Psoas muscle (tissue), 8 donors: ENCODE measurements at regions of chr9 and their contacts with region 1.

Region 1: GRCh38 chr9:137974588-137975526 is 97.3 kb downstream of the CACNA1B start:
- DNase-seq: peak in 1 of 2 donors; percentile 29
- ATAC-seq: no peak
- H3K4me3 ChIP-seq: no peak overlapping the region
- H3K27ac ChIP-seq: no peak overlapping the region
- H3K4me1 ChIP-seq: no peaks in the 10 kb centered on the region
- H3K27me3 ChIP-seq: peaks cover 0 to 2% (median 0%) of the 10 kb centered on the region in 3 donors
- CTCF ChIP-seq: no peak

Region 2: DNA sequence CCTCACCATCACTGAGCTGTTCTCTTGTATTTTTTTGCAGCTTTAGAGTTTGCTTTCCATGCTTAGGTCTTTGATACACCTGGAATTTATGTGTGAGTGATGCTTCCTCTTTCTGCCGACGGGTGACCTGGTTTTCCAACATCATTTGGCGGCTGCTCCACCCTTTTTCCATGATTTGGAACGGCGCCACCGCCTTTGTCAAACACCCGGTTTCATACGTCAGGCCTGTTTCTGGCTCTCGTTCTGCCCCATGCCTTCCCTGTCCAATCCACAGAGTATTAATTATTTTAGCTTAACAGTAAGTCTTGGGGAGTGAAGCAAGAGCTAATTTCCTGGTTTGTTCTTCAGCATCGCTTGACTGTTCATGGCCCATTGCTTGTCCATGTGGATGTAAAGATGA is 67.1 kb before region 1 on chr9:
- intact Hi-C with region 1: loop called in 1 of 2 experiments (anchors 2 kb)
- DNase-seq: no peak
- ATAC-seq: no peak
- H3K4me3 ChIP-seq: no peak overlapping the region
- H3K27ac ChIP-seq: no peak overlapping the region
- H3K4me1 ChIP-seq: no peaks in the 10 kb centered on the region
- H3K27me3 ChIP-seq: peaks cover 0 to 15% (median 2%) of the 10 kb centered on the region in 3 donors
- CTCF ChIP-seq: no peak

Region 3: GRCh38 chr9:138007911-138008841 is 33.3 kb after region 1 on chr9:
- intact Hi-C with region 1: no loop called
- DNase-seq: peak in 1 of 2 donors; percentile 28
- ATAC-seq: no peak
- H3K4me3 ChIP-seq: no peak overlapping the region
- H3K27ac ChIP-seq: no peak overlapping the region
- H3K4me1 ChIP-seq: no peaks in the 10 kb centered on the region
- H3K27me3 ChIP-seq: peaks cover 0 to 5% (median 0%) of the 10 kb centered on the region in 3 donors
- CTCF ChIP-seq: no peak

Region 4: GRCh38 chr9:138022121-138022741 is 47.4 kb after region 1 on chr9:
- intact Hi-C with region 1: no loop called
- DNase-seq: peak in 1 of 2 donors; percentile 27
- ATAC-seq: no peak
- H3K4me3 ChIP-seq: no peak overlapping the region
- H3K27ac ChIP-seq: no peak overlapping the region
- H3K4me1 ChIP-seq: no peaks in the 10 kb centered on the region
- H3K27me3 ChIP-seq: peaks cover 0 to 59% (median 17%) of the 10 kb centered on the region in 3 donors
- CTCF ChIP-seq: no peak